ENCODE measurements at regions of chr7 and their contacts with region 1.

Region 1: GRCh38 chr7:95686109-95686508 is 86.2 kb upstream of the DYNC1I1 start:
- DNase-seq: no peak

Region 2: GRCh38 chr7:95511716-95512260 is 174.3 kb before region 1 on chr7:
- intact Hi-C with region 1: loop called (anchors 5 kb)
- DNase-seq: no peak

Region 3: DNA sequence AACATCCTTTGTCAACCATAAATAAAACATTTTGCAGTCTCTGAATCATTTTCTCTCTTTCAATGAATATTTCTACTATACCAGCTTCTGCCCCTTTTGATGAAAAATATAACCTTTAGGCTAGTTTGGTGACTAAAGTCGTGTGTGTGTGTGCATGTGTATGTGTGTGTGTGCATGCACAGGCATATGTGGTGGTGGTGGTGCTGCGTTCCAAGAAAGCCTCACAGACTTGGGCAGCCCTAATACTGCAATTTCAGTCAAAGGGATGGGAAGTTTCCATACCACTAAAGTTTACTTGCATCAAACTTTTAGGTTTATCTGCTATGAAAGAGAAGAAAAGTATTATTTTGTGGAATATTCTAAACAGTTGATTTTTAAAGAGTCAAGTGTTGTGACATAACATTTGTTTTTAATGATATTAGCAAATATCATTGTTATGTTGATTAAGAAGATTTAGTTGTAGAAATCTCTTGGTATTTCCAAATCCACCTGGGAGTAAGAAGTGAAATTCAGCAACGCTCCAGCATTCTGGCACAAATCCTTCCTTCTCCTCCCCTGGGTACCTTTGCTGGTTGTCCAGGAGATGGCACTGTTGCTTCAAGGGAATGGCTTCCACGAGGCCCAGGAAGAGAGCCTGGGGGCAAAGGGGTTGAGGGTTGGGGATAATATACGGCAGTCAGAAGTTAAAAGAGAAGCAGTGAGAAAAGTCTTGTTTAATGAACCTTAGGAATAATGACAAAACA is 158.9 kb before region 1 on chr7:
- intact Hi-C with region 1: loop called (anchors 1 kb)
- DNase-seq: no peak

Region 4: GRCh38 chr7:95545078-95545498 is 141.0 kb before region 1 on chr7:
- intact Hi-C with region 1: loop called (anchors 1 kb)
- DNase-seq: no peak

Region 5: DNA sequence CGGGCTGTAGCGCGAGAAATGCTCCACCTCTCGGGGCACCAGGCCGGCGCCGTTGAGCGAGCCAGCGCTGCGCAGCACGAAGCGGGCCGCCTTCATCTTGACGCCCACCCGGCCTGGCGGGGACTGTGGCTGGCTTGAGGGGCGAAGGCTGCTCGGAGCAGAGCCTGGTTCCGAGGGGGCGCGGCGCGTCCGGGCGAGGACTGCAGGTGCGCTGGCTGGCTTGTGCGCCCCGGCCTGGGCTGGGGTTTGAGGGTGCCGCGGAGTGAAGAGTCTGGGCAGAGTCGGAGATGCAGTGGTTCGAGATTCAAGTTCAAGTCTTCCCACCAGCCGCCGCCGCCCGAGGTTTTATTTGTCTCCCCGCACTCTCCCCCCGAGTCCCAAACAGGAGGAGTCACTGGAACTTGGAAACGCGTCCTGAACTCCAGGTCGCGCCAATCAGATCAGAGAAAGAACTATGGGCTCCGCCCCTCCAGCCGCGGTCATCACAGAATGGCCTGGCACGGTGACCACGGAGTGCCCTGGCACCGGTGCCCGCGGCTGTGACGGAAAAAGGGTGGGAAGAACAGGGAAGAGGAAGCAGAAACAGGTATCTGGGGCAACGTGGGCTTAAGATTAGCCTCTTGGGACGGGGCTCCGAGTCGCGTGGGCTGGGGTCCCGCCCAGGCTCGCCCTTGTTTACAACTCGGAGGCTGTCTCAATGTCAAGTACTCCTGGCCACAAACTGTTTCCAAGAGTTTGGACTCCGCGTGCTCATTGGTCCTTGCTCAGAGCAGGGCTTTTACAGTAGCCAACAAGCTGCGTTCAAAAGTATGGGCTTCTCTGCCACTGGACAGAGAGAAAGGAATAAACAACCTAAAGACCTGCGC is 89.7 kb before region 1 on chr7 and contains the start of gene PDK4:
- intact Hi-C with region 1: loop called (anchors 5 kb)
- DNase-seq: peak; percentile 96
- total RNA-seq, gene PDK4: 49.0 TPM

Region 6: DNA sequence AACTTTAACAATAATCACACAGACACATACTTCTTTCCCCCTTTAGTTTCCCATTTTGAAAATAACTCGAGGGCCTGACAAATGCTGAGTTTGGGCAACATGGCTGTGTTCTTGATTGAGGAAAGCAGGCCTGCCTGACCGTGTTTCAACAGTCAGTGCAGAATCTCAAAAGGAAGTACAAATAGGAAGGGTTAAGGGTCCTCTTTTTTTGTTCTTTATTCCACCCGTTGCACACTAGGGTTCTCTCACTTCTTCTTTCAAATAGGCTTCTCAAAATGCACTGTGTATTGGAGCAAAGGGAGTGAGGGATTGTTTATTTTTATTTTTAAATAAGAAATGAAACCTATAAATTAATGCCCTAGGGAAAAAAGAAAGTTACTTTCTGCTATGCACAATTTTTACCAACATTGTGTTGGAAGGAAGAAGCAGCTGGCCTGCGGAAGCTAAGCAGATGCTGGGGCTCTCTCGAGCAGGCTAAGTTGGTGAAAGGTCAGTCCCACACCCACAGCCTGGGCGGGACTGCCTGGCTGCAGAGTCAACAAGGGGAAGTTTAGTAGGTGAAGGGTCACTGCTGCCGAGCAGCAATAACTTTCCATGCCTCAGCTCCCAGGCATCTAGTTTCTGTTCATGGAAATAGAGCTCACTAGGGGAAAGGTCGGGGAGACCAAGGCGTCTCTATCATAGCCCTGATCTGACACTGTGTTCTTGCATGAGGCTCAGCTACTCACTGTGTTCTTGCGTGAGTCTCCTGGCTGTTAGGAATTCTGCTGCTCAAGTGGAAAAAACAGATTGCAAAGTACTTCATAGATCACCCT is 77.5 kb before region 1 on chr7:
- intact Hi-C with region 1: loop called (anchors 5 kb)
- DNase-seq: peak; percentile 94

Measured in cardiac septum (tissue), 1 donor.